Calu3 (cell line): ENCODE measurements at regions of chr1 and their contacts with region 1.

Region 1: GRCh38 chr1:61839679-61840078 is 97.4 kb downstream of the PATJ start:
- DNase-seq: no peak
- H3K4me3 Mint-ChIP-seq: peak overlapping the region; percentile 17
- H3K27ac Mint-ChIP-seq: peak overlapping the region; percentile 70
- H3K4me1 Mint-ChIP-seq: peaks cover 26% of the 10 kb centered on the region
- H3K27me3 Mint-ChIP-seq: no peaks in the 10 kb centered on the region
- CTCF ChIP-seq: no peak

Region 2: GRCh38 chr1:61818992-61819391 is 20.7 kb before region 1 on chr1:
- CTCF ChIA-PET with region 1: interaction called, 10 read pairs
- intact Hi-C with region 1: no loop called
- DNase-seq: no peak
- H3K4me3 Mint-ChIP-seq: no peak overlapping the region
- H3K27ac Mint-ChIP-seq: no peak overlapping the region
- H3K4me1 Mint-ChIP-seq: no peaks in the 10 kb centered on the region
- H3K27me3 Mint-ChIP-seq: no peaks in the 10 kb centered on the region
- CTCF ChIP-seq: no peak